ENCODE measurements at regions of chr14 and their contacts with region 1.

Region 1: DNA sequence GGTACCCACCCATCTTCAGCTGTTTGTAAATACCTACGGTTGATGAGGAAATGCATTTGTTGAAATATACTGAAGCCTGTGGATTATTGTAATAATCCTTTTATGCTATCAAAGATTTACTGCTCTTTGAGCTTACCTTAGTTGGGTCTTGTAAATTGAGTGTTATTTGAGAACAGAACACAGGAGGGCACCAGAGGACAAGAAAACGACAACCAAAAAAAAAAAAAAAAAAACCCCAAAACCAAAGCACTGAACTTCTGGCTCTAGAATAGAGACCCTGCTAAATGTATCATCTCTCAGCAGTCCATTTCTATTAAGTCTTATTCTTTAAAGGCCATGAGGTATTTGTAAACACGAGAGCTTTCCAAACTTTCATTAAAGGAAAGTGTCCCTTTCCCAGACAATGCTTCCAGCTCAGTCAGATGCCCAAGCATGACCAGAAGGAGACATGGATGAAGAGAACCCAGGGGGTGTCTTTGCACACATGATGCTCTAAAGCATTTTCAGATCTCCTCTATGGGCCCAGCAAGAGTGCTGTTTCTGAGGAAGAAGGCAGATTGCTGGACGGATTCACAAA is 763.9 kb downstream of the NRXN3 start:
- DNase-seq: no peak
- H3K4me3 ChIP-seq: no peak overlapping the region
- H3K27me3 ChIP-seq: no peaks in the 10 kb centered on the region
- CTCF ChIP-seq: peak; percentile 59

Region 2: DNA sequence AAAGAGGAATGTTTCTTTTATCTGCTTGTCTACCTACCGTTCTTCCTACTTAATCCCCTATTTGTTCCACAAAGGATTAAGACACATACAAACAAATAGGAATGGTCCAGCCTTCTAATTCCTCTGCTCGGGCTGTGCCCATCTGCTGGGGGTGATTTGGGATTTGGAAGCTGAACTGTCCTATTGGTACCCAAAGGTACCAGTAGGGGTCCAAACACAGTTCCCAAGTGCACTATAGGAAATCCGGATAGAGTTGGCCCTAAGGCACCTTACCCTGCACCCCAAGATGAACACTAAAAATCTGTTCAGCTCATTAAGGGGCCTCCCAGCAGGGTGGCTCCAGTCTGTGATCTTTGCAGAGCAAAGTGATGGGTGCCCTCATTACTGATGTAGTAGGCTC is 196.9 kb before region 1 on chr14:
- CTCF ChIA-PET with region 1: no interaction called
- POLR2A ChIA-PET with region 1: no interaction called
- DNase-seq: no peak
- H3K4me3 ChIP-seq: no peak overlapping the region
- H3K27me3 ChIP-seq: no peaks in the 10 kb centered on the region
- CTCF ChIP-seq: no peak

Region 3: GRCh38 chr14:78805570-78805969 is 128.5 kb before region 1 on chr14:
- CTCF ChIA-PET with region 1: no interaction called
- POLR2A ChIA-PET with region 1: no interaction called
- DNase-seq: no peak
- H3K4me3 ChIP-seq: no peak overlapping the region
- H3K27me3 ChIP-seq: no peaks in the 10 kb centered on the region
- CTCF ChIP-seq: no peak

Region 4: DNA sequence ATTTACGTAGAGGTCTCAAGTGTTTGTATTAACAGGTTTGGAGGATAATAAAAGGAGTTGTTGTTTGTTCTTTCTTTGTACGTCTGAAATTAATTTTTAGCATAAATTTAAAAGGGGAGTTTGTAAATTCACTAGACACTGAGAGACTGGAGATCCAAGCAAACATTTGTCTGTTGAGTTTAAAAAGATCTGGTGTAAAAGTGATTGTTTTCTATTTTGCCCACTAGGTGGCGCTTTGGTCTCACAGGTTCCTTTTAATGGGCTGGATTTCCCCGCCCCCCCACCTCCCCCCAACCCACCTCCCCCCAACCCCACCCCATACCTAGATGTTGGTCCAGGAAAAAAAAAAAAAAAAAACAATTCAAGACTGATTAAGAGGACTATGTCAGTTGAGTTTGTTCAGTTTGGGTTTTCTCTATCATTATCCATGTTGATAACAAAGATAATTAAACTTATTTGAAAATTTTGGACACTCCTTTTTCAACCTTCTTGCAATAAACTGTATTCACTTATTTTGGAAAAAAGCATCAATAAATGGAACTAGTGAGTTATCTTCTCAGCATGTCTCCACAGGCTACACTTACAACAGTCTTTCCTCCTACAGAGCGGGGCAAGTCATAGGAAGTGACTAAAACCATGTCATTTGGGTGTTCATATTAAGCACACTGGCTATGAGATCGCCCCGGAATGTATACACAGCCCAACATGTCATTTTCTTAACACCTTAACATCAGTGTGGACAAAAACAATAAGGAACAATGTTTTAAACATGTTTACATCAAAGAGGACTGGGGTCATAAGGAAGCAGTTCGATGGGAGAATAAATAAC is 77.3 kb after region 1 on chr14:
- CTCF ChIA-PET with region 1: no interaction called
- POLR2A ChIA-PET with region 1: no interaction called
- DNase-seq: peak; percentile 25
- H3K4me3 ChIP-seq: no peak overlapping the region
- H3K27me3 ChIP-seq: no peaks in the 10 kb centered on the region
- CTCF ChIP-seq: peak; percentile 50

Region 5: GRCh38 chr14:80621701-80622100 is 1687.7 kb after region 1 on chr14:
- CTCF ChIA-PET with region 1: no interaction called
- POLR2A ChIA-PET with region 1: interaction called, 12 read pairs
- DNase-seq: peak; percentile 55
- H3K4me3 ChIP-seq: no peak overlapping the region
- H3K27me3 ChIP-seq: no peaks in the 10 kb centered on the region
- CTCF ChIP-seq: no peak